Heart left ventricle (tissue), 16 donors: ENCODE measurements at regions of chr1 and their contacts with region 1.

Region 1: DNA sequence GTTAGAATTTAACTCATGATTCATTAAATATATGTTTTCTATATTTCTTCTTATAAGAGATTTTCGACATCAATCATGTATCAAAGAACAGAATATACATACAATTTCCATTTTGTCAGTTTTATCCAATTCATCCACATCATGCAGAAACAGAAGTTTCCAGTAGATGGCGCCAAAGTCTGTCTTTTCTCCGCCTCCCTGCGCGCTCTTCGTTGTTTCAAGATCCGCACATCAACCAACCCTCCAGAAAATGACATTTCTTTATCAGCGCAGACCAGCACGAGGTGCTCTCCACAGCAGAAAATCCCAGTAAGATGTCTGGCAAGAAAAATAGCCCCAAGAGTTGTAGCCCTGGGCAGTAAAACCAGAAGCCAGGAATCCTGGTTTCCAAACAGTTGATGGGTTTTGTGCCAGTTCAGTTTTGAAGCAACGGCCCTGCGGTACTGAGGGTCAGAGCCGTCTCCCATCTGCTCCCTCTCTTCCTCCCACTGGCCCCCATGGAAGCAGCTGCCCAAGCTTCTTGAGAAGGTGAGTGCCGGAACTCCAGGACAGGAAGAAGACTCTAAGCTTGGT is 38.6 kb upstream of the GPR137B start:
- DNase-seq: peak in 3 of 5 donors; percentile 37 to 50 (median 42)
- ATAC-seq: peak in 2 of 4 donors; percentile 31 to 60
- H3K4me3 ChIP-seq: no peak overlapping the region
- H3K27ac ChIP-seq: no peak overlapping the region
- H3K4me1 ChIP-seq: peaks cover 0 to 5% (median 0%) of the 10 kb centered on the region in 12 donors
- H3K27me3 ChIP-seq: no peaks in the 10 kb centered on the region
- CTCF ChIP-seq: peak; percentile 75 to 90 (median 81)
- POLR2A ChIP-seq: no peak

Region 2: GRCh38 chr1:236156512-236157208 is 52.9 kb after region 1 on chr1:
- intact Hi-C with region 1: no loop called
- DNase-seq: peak in 2 of 5 donors; percentile 41 to 74
- ATAC-seq: peak in 1 of 4 donors; percentile 53
- H3K4me3 ChIP-seq: no peak overlapping the region
- H3K27ac ChIP-seq: peak overlapping the region in 1 of 12 donors; percentile 58
- H3K4me1 ChIP-seq: peaks cover 0 to 41% (median 6%) of the 10 kb centered on the region in 12 donors
- H3K27me3 ChIP-seq: no peaks in the 10 kb centered on the region
- CTCF ChIP-seq: no peak
- POLR2A ChIP-seq: no peak

Region 3: DNA sequence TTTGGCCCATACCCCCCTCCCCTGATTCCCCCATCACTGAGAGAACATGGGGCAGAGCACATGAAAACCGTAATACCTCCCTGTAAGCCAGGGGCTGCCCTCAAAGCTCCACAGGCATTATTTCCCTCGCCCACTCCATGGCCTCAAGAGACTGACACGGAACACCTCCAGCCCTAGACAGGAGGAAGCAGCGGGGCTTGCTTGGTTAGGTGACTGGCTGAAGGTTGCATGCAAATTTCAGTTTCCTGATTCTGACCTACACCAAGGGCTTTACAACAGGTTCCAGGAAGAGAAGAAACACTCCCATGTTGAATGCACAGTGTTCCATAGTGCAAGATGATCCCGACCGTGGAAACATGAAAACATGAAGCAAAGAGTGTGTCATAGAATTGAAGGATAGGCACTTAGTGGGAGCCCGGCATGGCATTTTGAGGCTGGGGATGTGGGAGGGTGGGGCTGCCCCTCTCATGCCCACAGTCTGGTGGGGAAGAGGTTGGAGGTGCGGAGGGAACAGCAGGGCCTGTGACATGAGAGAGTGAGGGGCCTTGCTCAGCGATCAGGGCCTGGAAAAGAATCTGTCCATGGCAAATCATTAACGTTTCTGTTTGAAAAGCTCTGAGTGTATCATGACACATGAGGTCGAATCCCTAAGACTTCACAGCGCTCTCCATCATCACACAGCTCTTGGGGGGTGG is 72.1 kb after region 1 on chr1:
- intact Hi-C with region 1: loop called in 1 of 10 experiments (anchors 5 kb)
- DNase-seq: no peak
- ATAC-seq: no peak
- H3K4me3 ChIP-seq: no peak overlapping the region
- H3K27ac ChIP-seq: no peak overlapping the region
- H3K4me1 ChIP-seq: peaks cover 0 to 9% (median 0%) of the 10 kb centered on the region in 12 donors
- H3K27me3 ChIP-seq: no peaks in the 10 kb centered on the region
- CTCF ChIP-seq: no peak
- POLR2A ChIP-seq: no peak

Region 4: DNA sequence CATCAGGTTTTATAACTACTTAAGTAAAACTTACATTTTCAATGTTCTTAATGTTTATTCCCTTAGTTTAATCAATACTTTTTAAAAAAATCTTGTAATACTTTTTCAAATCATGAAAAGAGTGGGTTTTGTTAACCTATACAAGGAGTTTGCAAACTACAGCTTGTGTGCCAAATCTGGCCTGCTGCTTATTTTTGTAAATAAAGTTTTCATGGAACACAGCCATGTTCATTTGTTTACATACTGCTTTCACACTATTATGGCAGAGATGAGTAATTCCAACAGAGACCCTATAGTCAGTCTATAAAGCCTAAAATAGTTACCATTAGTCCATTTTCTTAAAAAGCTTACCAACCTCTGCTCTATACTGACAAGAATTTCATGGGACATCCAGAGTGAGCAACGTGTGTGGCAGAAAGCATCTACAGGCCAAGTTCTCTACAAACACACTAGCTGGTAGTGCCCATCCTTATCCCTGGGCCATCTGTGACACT is 135.4 kb after region 1 on chr1:
- intact Hi-C with region 1: no loop called
- DNase-seq: no peak
- ATAC-seq: no peak
- H3K4me3 ChIP-seq: no peak overlapping the region
- H3K27ac ChIP-seq: no peak overlapping the region
- H3K4me1 ChIP-seq: no peaks in the 10 kb centered on the region
- H3K27me3 ChIP-seq: no peaks in the 10 kb centered on the region
- CTCF ChIP-seq: no peak
- POLR2A ChIP-seq: no peak

Region 5: GRCh38 chr1:236489710-236490377 is 386.1 kb after region 1 on chr1:
- intact Hi-C with region 1: loop called in 4 of 10 experiments (anchors 2 kb)
- DNase-seq: peak in 1 of 5 donors; percentile 21
- ATAC-seq: peak in 3 of 4 donors; percentile 57 to 77 (median 61)
- H3K4me3 ChIP-seq: peak overlapping the region in 1 of 12 donors; percentile 31
- H3K27ac ChIP-seq: peak overlapping the region in 1 of 12 donors; percentile 42
- H3K4me1 ChIP-seq: peaks cover 0 to 16% (median 2%) of the 10 kb centered on the region in 12 donors
- H3K27me3 ChIP-seq: no peaks in the 10 kb centered on the region
- CTCF ChIP-seq: peak; percentile 43 to 71 (median 63)
- POLR2A ChIP-seq: no peak

Region 6: GRCh38 chr1:236774926-236775325 is 671.2 kb after region 1 on chr1:
- intact Hi-C with region 1: loop called in 1 of 10 experiments (anchors 10 kb)
- DNase-seq: no peak
- ATAC-seq: peak; percentile 50 to 70 (median 55)
- H3K4me3 ChIP-seq: no peak overlapping the region
- H3K27ac ChIP-seq: no peak overlapping the region
- H3K4me1 ChIP-seq: no peaks in the 10 kb centered on the region
- H3K27me3 ChIP-seq: no peaks in the 10 kb centered on the region
- CTCF ChIP-seq: peak in 8 of 12 donors; percentile 20 to 50 (median 44)
- POLR2A ChIP-seq: no peak

Region 7: GRCh38 chr1:237562242-237562823 is 1458.6 kb after region 1 on chr1:
- intact Hi-C with region 1: loop called in 1 of 10 experiments (anchors 10 kb)
- DNase-seq: no peak
- ATAC-seq: no peak
- H3K4me3 ChIP-seq: no peak overlapping the region
- H3K27ac ChIP-seq: no peak overlapping the region
- H3K4me1 ChIP-seq: peaks cover 0 to 40% (median 4%) of the 10 kb centered on the region in 12 donors
- H3K27me3 ChIP-seq: no peaks in the 10 kb centered on the region
- CTCF ChIP-seq: peak; percentile 26 to 66 (median 53)
- POLR2A ChIP-seq: no peak